ENCODE measurements at regions of chr9 and their contacts with region 1.

Region 1: DNA sequence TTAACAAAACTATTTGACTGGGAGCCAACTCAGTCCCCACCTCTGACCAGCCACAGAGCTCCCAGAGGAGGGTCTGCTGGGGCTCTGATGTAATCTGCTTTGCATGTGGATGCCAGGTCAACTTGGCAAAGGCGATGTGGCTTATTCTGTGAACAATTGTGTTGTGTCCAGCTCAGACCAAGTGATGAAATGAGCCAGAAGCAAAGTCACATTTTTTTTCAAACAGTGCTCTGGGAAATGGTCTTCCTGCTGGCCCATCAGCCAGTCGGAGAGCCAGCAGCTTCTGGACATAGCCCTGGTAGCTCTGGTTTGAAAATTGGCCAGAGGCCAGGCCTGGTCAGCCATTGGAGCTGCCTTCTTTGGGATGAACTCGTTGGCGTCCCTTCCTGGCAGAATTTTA is 86.5 kb downstream of the ANGPTL2 start:
- DNase-seq: peak; percentile 89

Region 2: DNA sequence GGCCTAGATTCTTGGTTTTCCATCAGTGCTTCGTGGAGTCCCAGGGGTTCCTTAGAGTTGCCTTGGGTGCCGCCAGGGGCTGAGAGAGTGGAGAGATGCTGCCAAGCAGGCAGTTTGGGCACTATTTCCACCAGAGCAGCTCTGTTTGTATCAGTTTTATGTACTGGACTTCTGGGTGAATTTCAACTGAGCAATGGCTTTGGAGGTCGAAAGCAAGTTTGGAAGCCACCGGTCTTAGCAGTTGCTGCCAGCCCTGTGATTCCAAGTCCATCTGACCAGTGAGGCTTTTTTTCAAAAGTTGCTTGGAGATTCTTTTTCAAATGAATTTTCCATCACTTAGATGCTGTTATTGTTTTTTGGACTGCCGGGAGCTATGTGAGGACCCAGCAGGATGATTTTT is 18.0 kb after region 1 on chr9:
- intact Hi-C with region 1: loop called in 1 of 2 experiments (anchors 2 kb)
- DNase-seq: no peak

Region 3: GRCh38 chr9:127083138-127083980 is 47.4 kb after region 1 on chr9:
- intact Hi-C with region 1: no loop called
- DNase-seq: no peak

Region 4: GRCh38 chr9:127112056-127112455 is 76.1 kb after region 1 on chr9:
- intact Hi-C with region 1: no loop called
- DNase-seq: peak; percentile 80

Measured in posterior vena cava (tissue), 2 donors.